CD8-positive, alpha-beta T cell (primary cell): ENCODE measurements at regions of chr15 and their contacts with region 1.

Region 1: GRCh38 chr15:50876989-50877360 is 31.5 kb upstream of the AP4E1 start:
- DNase-seq: peak; percentile 34 to 85 (median 67)
- ATAC-seq: peak; percentile 80
- H3K4me3 ChIP-seq: peak overlapping the region; percentile 10 to 40
- H3K4me3 Mint-ChIP-seq: peak overlapping the region; percentile 68
- H3K27ac ChIP-seq: no peak overlapping the region
- H3K27ac Mint-ChIP-seq: no peak overlapping the region
- H3K4me1 ChIP-seq: peaks cover 13% of the 10 kb centered on the region
- H3K4me1 Mint-ChIP-seq: peaks cover 6% of the 10 kb centered on the region
- H3K27me3 ChIP-seq: no peaks in the 10 kb centered on the region
- H3K27me3 Mint-ChIP-seq: peaks cover 3% of the 10 kb centered on the region
- CTCF ChIP-seq: peak; percentile 95

Region 2: DNA sequence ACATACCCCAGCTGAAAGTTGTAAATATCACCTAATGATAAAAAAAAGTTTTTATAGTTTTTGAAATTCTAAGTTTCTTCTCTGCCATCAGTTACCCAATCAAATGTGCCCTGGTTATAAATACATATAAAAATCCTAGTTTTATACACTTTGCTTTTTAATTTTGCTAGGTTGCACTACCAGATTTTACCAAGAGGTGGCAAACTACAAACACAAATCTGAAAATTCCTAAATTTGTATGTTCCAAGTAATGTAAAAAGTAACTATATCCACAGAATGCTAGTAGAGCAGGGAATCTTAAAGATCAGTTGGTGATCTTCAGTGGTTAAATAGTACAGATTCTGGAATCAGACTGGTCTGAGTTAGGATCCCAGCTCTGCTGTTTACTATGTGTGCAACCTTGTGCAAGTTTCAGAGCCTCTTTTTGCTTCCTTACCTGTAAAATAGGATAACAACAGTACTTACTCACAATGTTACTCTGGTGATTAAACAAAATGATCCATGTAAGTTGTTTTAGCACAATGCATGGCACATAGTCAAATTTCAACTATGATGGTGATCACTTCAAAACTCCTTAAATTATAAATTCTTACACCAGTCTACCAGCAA is 201.3 kb before region 1 on chr15:
- CTCF ChIA-PET with region 1: interaction called, 26 read pairs
- POLR2A ChIA-PET with region 1: no interaction called
- intact Hi-C with region 1: loop called (anchors 1 kb)
- DNase-seq: peak in 2 of 9 experiments; percentile 47 to 57
- ATAC-seq: peak; percentile 56
- H3K4me3 ChIP-seq: no peak overlapping the region
- H3K4me3 Mint-ChIP-seq: no peak overlapping the region
- H3K27ac ChIP-seq: no peak overlapping the region
- H3K27ac Mint-ChIP-seq: peak overlapping the region; percentile 37
- H3K4me1 ChIP-seq: peaks cover 7% of the 10 kb centered on the region
- H3K4me1 Mint-ChIP-seq: peaks cover 49% of the 10 kb centered on the region
- H3K27me3 ChIP-seq: no peaks in the 10 kb centered on the region
- H3K27me3 Mint-ChIP-seq: no peaks in the 10 kb centered on the region
- CTCF ChIP-seq: peak; percentile 100

Region 3: DNA sequence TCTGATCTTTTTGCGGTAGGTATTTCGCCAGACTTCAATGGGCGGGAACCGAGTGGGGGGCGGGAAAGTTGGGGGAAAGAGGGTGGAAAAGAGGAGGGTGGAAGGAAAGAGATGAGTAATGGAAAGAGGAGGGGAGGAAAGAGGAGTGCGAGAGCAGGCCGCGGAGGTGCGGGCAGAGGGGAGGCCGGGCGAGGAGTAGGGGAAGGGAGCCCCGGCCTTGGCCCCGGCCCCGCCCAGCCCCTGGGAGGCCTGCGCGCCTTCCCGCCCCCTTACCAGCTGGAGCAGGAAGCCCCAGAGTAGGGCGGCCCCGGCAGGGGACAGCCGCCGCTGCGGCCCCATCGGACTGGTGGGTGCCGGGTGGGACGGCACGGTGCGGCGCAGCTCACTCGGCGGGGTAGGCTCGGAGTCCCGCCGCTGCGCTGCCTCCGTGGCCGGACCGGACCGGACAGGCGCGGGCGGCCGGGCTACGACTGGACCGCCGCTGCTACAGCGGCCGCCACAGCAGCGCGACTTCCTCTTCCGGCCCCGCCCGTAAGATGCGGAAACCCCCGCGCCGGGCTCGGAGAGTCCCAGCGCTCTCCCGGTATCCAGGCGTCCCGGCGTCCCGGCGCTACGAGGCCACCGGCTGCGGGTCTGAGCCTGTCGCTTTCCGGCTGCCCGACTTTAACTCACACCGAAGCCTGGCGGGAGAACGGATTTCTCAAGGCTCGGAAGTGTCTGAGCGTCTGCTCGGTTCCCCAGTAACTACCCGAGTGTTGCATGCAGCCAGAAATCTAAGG is 111.6 kb before region 1 on chr15 and contains the start of gene SPPL2A:
- CTCF ChIA-PET with region 1: no interaction called
- POLR2A ChIA-PET with region 1: no interaction called
- intact Hi-C with region 1: loop called in 1 of 2 experiments (anchors 5 kb)
- DNase-seq: peak; percentile 50 to 90 (median 76)
- ATAC-seq: peak; percentile 91
- H3K4me3 ChIP-seq: peak within 1 kb of the TSS; percentile 69 to 77
- H3K4me3 Mint-ChIP-seq: peak within 1 kb of the TSS; percentile 90
- H3K27ac ChIP-seq: peak within 1 kb of the TSS; percentile 63 to 90
- H3K27ac Mint-ChIP-seq: peak within 1 kb of the TSS; percentile 92
- H3K4me1 ChIP-seq: peaks cover 20% of the 10 kb centered on the region
- H3K4me1 Mint-ChIP-seq: peaks cover 45% of the 10 kb centered on the region
- H3K27me3 ChIP-seq: no peaks in the 10 kb centered on the region
- H3K27me3 Mint-ChIP-seq: no peaks in the 10 kb centered on the region
- CTCF ChIP-seq: no peak
- total RNA-seq, gene SPPL2A: 33.4 to 36.8 TPM

Region 4: DNA sequence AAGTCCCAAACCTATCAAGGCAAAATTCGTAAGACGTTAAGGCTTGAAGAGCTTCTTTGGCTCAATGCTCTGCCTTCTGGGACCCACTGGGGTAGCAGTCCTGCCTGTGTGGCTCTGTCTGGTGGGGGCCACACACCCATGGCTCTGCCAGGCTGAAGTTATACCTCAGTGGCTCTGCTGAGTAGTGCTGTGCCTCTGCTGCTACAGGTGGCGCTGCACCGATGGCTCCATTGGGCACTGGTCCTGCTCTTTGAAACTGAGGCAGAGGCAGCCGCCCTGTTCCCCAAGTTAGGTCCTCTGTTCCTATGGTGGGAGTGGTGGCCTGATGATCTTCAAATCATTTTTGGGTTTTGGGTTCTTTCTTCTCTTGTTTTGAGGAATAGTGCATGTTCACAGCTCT is 36.5 kb before region 1 on chr15:
- CTCF ChIA-PET with region 1: no interaction called
- POLR2A ChIA-PET with region 1: no interaction called
- intact Hi-C with region 1: no loop called
- DNase-seq: no peak
- ATAC-seq: no peak
- H3K4me3 ChIP-seq: no peak overlapping the region
- H3K4me3 Mint-ChIP-seq: no peak overlapping the region
- H3K27ac ChIP-seq: no peak overlapping the region
- H3K27ac Mint-ChIP-seq: no peak overlapping the region
- H3K4me1 ChIP-seq: no peaks in the 10 kb centered on the region
- H3K4me1 Mint-ChIP-seq: no peaks in the 10 kb centered on the region
- H3K27me3 ChIP-seq: no peaks in the 10 kb centered on the region
- H3K27me3 Mint-ChIP-seq: peaks cover 2% of the 10 kb centered on the region
- CTCF ChIP-seq: no peak

Region 5: GRCh38 chr15:50865515-50866353 is 11.2 kb before region 1 on chr15:
- CTCF ChIA-PET with region 1: interaction called, 10 read pairs
- POLR2A ChIA-PET with region 1: no interaction called
- intact Hi-C with region 1: loop called in 1 of 2 experiments (anchors 2 kb)
- DNase-seq: no peak
- ATAC-seq: no peak
- H3K4me3 ChIP-seq: no peak overlapping the region
- H3K4me3 Mint-ChIP-seq: no peak overlapping the region
- H3K27ac ChIP-seq: no peak overlapping the region
- H3K27ac Mint-ChIP-seq: no peak overlapping the region
- H3K4me1 ChIP-seq: no peaks in the 10 kb centered on the region
- H3K4me1 Mint-ChIP-seq: no peaks in the 10 kb centered on the region
- H3K27me3 ChIP-seq: no peaks in the 10 kb centered on the region
- H3K27me3 Mint-ChIP-seq: no peaks in the 10 kb centered on the region
- CTCF ChIP-seq: no peak

Region 6: GRCh38 chr15:51405693-51406523 is 528.9 kb after region 1 on chr15:
- CTCF ChIA-PET with region 1: no interaction called
- POLR2A ChIA-PET with region 1: no interaction called
- intact Hi-C with region 1: no loop called
- DNase-seq: no peak
- ATAC-seq: no peak
- H3K4me3 ChIP-seq: no peak overlapping the region
- H3K4me3 Mint-ChIP-seq: no peak overlapping the region
- H3K27ac ChIP-seq: no peak overlapping the region
- H3K27ac Mint-ChIP-seq: no peak overlapping the region
- H3K4me1 ChIP-seq: no peaks in the 10 kb centered on the region
- H3K4me1 Mint-ChIP-seq: no peaks in the 10 kb centered on the region
- H3K27me3 ChIP-seq: no peaks in the 10 kb centered on the region
- H3K27me3 Mint-ChIP-seq: peaks cover 14% of the 10 kb centered on the region
- CTCF ChIP-seq: no peak